ENCODE measurements at regions of chr3 and their contacts with region 1.

Region 1: DNA sequence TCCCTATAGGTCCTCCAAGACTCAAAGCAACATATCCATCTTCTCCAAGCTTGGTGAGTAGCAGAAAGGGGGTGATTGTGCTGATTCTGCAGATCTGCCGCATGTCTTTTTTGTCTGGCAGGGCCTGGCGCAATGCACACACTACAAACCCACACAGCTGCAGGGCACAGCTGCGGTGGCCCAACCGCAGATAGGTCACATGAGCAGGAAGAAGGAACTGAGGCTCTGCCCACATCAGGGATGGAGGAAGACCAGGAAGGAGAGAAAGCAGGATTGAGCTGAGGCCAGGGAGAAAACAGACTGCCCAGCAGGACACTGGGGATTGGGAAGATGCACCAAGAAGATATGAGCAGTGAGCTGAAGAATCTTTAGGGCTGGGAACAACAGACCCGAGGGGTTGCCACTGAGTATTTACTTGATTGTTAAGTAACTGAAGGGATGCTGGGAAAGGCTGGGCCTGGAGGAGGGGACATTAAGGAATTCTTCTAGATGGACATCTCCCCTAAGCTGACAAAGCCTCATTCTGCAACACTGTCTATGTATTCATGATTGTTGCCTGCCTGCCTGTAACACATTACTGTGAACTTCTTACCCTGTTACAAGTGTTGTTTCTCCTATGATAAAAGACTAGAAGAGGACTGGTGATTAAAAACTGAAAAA is 126.7 kb downstream of the MYLK start:
- DNase-seq: no peak
- ATAC-seq: no peak
- H3K4me3 ChIP-seq: no peak overlapping the region; a peak in 1 of 6 replicates
- H3K27ac ChIP-seq: peak overlapping the region; percentile 90
- H3K4me1 ChIP-seq: peaks cover 89% of the 10 kb centered on the region
- H3K27me3 ChIP-seq: no peaks in the 10 kb centered on the region
- CTCF ChIP-seq: no peak
- EP300 ChIP-seq: no peak
- POLR2A ChIP-seq: no peak
- RAD21 ChIP-seq: no peak

Region 2: GRCh38 chr3:123783811-123784210 is 26.4 kb after region 1 on chr3:
- CTCF ChIA-PET with region 1: no interaction called
- POLR2A ChIA-PET with region 1: interaction called, 6 read pairs
- in situ Hi-C with region 1: no loop called
- intact Hi-C with region 1: loop called (anchors 2 kb)
- DNase-seq: no peak
- ATAC-seq: peak; percentile 37; the same call in 1 of the 3 replicates
- H3K4me3 ChIP-seq: no peak overlapping the region; a peak in 1 of 6 replicates
- H3K27ac ChIP-seq: peak overlapping the region; percentile 56
- H3K4me1 ChIP-seq: peaks cover 56% of the 10 kb centered on the region
- H3K27me3 ChIP-seq: no peaks in the 10 kb centered on the region
- CTCF ChIP-seq: no peak
- EP300 ChIP-seq: no peak
- POLR2A ChIP-seq: no peak
- RAD21 ChIP-seq: no peak

Measured in HepG2 (cell line).